SK-N-SH (cell line): ENCODE measurements at regions of chr7 and their contacts with region 1.

Region 1: GRCh38 chr7:140683657-140684056 is 10.9 kb downstream of the ADCK2 start:
- DNase-seq: no peak
- H3K4me3 ChIP-seq: no peak overlapping the region
- H3K27ac ChIP-seq: no peak overlapping the region
- H3K4me1 ChIP-seq: no peaks in the 10 kb centered on the region
- H3K27me3 ChIP-seq: no peaks in the 10 kb centered on the region
- CTCF ChIP-seq: no peak
- EP300 ChIP-seq: no peak
- RAD21 ChIP-seq: no peak

Region 2: DNA sequence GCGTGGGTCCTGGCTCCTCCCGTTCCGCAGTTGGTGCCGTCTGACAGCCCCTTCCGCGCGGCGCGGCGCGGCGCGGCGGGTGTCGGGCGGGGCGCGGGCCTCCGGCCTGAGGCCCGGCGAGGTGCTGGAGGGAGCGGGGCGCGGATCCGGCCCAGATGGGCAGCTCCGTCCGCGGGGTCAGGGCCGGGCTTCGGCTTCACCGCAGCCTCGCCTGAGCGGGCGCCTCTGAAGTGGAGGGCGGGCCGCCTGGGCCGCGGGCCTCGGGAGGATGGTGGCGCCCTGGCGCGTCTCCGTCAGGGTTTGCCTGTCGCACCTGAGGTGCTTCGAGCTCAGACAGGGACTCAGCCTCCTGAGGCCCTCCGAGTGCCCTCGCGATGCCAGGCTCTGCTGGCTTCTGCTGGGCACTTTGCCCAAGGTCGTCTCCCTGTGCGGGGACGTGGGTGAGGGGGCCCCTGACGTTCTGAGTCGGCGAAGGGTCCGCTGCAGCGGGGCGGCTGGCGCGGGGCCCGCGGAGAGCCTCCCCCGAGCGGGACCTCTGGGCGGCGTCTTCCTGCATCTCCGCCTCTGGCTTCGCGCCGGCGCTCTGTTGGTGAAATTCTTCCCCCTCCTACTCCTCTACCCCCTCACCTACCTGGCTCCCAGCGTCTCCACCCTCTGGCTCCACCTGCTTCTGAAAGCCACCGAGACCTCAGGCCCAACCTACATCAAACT is 10.4 kb before region 1 on chr7:
- CTCF ChIA-PET with region 1: interaction called, 15 read pairs
- POLR2A ChIA-PET with region 1: no interaction called
- DNase-seq: peak; percentile 89
- H3K4me3 ChIP-seq: peak overlapping the region; percentile 64 to 74
- H3K27ac ChIP-seq: 0 out of 4 replicates have a peak overlapping the region, but pooled peaks of 1 of the 2 experiments have one; percentile 18
- H3K4me1 ChIP-seq: peaks cover 7 to 20% of the 10 kb centered on the region in 2 experiments; a peak in 2 of 4 replicates
- H3K27me3 ChIP-seq: no peaks in the 10 kb centered on the region
- CTCF ChIP-seq: no peak
- EP300 ChIP-seq: no peak
- RAD21 ChIP-seq: no peak

Region 3: DNA sequence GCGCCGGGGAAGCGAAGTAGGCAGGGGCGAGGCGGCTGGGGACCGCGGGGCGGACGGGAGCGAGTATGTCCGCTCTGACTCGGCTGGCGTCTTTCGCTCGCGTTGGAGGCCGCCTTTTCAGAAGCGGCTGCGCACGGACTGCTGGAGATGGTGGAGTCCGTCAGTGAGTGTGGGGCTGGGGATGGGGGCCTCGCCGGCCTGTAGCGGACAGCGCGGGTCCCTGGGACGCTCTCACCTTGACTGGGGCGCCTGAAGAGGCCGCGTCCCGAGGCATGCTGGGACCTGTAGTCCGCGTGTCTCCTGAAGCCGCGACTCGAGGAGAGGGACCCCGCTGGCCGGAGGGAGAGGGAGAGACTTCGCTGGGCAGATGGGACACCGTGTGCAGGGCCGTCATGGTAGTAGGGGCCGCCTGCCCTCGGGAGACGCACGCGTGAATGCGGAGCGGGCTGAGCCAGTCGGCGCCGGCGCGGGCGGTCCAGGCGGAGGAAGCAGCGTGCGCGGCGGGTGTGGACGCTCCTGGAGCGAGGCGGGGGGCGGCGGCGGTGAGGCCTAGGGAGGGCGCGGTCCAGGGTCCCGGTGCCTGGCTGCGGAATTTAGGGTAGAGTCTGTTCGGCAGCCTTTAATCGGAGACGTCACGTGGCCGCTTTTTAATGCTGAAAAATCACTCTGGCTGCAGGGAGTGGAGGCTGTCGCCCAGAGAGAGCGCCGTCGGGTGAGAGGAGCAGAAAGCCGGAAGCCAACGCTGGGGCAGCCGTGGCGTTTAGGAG is 13.2 kb after region 1 on chr7 and contains the start of gene NDUFB2:
- CTCF ChIA-PET with region 1: interaction called, 3 read pairs
- POLR2A ChIA-PET with region 1: interaction called, 10 read pairs
- DNase-seq: peak; percentile 96
- H3K4me3 ChIP-seq: peak within 1 kb of the TSS; percentile 79 to 95
- H3K27ac ChIP-seq: peak within 1 kb of the TSS; percentile 87 to 94
- H3K4me1 ChIP-seq: peaks cover 8 to 18% of the 10 kb centered on the region in 2 experiments; a peak in 3 of 4 replicates
- H3K27me3 ChIP-seq: no peaks in the 10 kb centered on the region
- CTCF ChIP-seq: no peak
- EP300 ChIP-seq: peak; percentile 9 to 21; a peak in 1 of 4 replicates
- RAD21 ChIP-seq: no peak
- polyA plus RNA-seq, gene NDUFB2: 1,154 and 1,214 TPM in 2 replicates